ENCODE measurements at regions of chr1 and their contacts with region 1.

Region 1: GRCh38 chr1:100132566-100133477 is at the starts of genes SASS6 and TRMT13:
- H3K4me3 Mint-ChIP-seq: peak within 1 kb of the TSS; percentile 98
- H3K27ac Mint-ChIP-seq: peak within 1 kb of the TSS; percentile 86
- H3K4me1 Mint-ChIP-seq: peaks cover 22% of the 10 kb centered on the region
- H3K27me3 Mint-ChIP-seq: no peaks in the 10 kb centered on the region

Region 2: GRCh38 chr1:99877568-99877967 is 255.3 kb before region 1 on chr1:
- intact Hi-C with region 1: no loop called
- H3K4me3 Mint-ChIP-seq: no peak overlapping the region
- H3K27ac Mint-ChIP-seq: no peak overlapping the region
- H3K4me1 Mint-ChIP-seq: no peaks in the 10 kb centered on the region
- H3K27me3 Mint-ChIP-seq: no peaks in the 10 kb centered on the region

Region 3: GRCh38 chr1:99969729-99970621 is 162.8 kb before region 1 on chr1 and contains the start of gene SLC35A3:
- intact Hi-C with region 1: loop called (anchors 5 kb)
- H3K4me3 Mint-ChIP-seq: peak within 1 kb of the TSS; percentile 100
- H3K27ac Mint-ChIP-seq: peak within 1 kb of the TSS; percentile 83
- H3K4me1 Mint-ChIP-seq: peaks cover 17% of the 10 kb centered on the region
- H3K27me3 Mint-ChIP-seq: no peaks in the 10 kb centered on the region

Region 4: GRCh38 chr1:100051401-100051800 is 81.4 kb before region 1 on chr1:
- intact Hi-C with region 1: no loop called
- H3K4me3 Mint-ChIP-seq: no peak overlapping the region
- H3K27ac Mint-ChIP-seq: no peak overlapping the region
- H3K4me1 Mint-ChIP-seq: peaks cover 26% of the 10 kb centered on the region
- H3K27me3 Mint-ChIP-seq: no peaks in the 10 kb centered on the region

Region 5: GRCh38 chr1:100152271-100152670 is 19.4 kb after region 1 on chr1:
- intact Hi-C with region 1: no loop called
- H3K4me3 Mint-ChIP-seq: no peak overlapping the region
- H3K27ac Mint-ChIP-seq: no peak overlapping the region
- H3K4me1 Mint-ChIP-seq: peaks cover 18% of the 10 kb centered on the region
- H3K27me3 Mint-ChIP-seq: no peaks in the 10 kb centered on the region

Region 6: DNA sequence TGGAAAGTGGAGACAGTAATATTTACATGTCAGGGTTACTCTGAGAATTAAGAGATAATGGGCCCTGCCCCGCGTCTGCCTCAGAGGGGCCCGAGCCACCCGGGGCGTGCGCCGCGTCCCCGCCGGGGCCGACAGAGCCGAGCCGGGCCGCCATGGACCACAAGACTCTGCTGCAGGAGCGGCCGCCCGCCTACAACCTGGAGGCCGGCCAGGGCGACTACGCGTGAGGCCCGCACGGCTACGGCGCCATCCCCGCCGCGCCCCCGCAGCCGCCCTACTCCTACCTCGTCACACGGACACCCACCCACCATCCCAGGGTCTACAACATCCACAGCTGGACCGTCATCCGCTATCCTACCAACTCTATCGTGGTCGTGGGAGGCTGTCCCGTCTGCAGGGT is 80.3 kb after region 1 on chr1:
- intact Hi-C with region 1: no loop called
- H3K4me3 Mint-ChIP-seq: no peak overlapping the region
- H3K27ac Mint-ChIP-seq: no peak overlapping the region
- H3K4me1 Mint-ChIP-seq: no peaks in the 10 kb centered on the region
- H3K27me3 Mint-ChIP-seq: no peaks in the 10 kb centered on the region

Region 7: GRCh38 chr1:100249537-100250257 is 116.9 kb after region 1 on chr1 and contains the start of gene DBT:
- intact Hi-C with region 1: loop called (anchors 10 kb)
- H3K4me3 Mint-ChIP-seq: no peak within 1 kb of the TSS
- H3K27ac Mint-ChIP-seq: no peak within 1 kb of the TSS
- H3K4me1 Mint-ChIP-seq: peaks cover 7% of the 10 kb centered on the region
- H3K27me3 Mint-ChIP-seq: no peaks in the 10 kb centered on the region

Region 8: DNA sequence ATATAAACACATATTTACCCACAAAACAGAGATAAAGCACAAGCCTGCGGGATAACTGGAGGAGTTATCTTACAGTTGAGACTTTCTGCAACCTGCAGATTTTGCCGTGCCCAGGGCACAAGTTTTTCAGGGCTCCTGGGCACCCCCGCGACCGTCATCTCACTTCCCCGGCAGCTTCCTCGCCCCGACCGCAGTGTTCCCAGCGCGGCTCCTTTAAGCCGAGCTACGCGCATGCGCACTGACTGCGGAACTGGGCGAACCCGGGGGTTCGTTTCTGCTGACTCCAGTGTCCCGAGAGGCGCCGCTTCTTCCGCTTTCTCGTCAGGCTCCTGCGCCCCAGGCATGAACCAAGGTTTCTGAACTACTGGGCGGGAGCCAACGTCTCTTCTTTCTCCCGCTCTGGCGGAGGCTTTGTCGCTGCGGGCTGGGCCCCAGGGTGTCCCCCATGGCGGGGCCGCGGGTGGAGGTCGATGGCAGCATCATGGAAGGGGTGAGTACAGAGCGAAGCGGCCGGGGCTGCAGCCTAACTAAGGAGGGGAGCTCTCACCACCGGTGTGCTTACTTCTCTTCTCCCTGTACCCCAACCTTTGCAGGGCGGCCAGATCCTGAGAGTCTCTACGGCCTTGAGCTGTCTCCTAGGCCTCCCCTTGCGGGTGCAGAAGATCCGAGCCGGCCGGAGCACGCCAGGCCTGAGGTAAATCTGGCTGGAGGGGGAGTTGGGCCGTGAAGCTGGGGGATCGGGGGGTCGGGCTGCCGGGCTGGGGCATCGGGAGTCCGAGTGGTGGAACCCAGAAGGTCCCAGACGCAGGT is 133.3 kb after region 1 on chr1 and contains the start of gene RTCA:
- intact Hi-C with region 1: loop called (anchors 5 kb)
- H3K4me3 Mint-ChIP-seq: peak within 1 kb of the TSS; percentile 100
- H3K27ac Mint-ChIP-seq: peak within 1 kb of the TSS; percentile 99
- H3K4me1 Mint-ChIP-seq: peaks cover 35% of the 10 kb centered on the region
- H3K27me3 Mint-ChIP-seq: no peaks in the 10 kb centered on the region

Region 9: DNA sequence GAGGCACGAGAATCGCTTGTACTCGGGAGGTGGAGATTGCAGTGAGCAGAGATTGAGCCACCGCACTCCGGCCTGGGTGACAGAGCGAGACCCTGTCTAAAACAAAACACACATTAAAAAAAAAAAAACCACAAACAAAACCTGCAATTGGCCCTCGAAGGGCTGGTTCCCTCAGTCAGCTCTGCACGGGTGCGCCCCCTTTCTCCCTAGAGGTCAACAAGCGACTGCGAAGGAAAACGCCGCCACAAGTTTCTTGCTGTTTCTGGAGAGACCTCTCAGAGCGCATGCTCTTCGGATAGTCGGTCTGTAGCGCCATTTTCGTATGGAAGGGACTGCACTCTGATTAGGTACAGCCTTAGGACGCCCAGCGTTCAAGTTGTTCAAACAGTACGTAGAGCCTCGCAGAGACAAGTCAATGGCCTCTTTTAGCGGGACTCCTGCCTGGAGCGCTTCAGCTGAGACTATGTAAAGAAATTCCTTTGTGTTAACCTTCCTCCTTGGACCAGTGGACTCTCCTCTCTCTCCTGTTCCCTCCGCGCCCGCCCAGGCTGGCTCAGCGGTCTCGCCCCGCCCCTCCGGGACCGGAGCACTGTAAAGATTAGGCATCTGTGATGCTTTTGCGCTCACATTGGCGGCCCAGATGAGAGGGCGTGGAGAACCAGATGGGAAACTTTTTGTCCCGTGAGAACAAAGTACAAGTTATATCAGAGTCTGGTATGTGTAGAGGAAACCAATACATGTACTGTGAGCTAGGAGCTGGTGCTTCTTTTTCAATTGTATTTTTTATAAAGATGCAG is 218.5 kb after region 1 on chr1:
- intact Hi-C with region 1: loop called (anchors 2 kb)
- H3K4me3 Mint-ChIP-seq: peak overlapping the region; percentile 91
- H3K27ac Mint-ChIP-seq: peak overlapping the region; percentile 89
- H3K4me1 Mint-ChIP-seq: peaks cover 37% of the 10 kb centered on the region
- H3K27me3 Mint-ChIP-seq: no peaks in the 10 kb centered on the region

Region 10: DNA sequence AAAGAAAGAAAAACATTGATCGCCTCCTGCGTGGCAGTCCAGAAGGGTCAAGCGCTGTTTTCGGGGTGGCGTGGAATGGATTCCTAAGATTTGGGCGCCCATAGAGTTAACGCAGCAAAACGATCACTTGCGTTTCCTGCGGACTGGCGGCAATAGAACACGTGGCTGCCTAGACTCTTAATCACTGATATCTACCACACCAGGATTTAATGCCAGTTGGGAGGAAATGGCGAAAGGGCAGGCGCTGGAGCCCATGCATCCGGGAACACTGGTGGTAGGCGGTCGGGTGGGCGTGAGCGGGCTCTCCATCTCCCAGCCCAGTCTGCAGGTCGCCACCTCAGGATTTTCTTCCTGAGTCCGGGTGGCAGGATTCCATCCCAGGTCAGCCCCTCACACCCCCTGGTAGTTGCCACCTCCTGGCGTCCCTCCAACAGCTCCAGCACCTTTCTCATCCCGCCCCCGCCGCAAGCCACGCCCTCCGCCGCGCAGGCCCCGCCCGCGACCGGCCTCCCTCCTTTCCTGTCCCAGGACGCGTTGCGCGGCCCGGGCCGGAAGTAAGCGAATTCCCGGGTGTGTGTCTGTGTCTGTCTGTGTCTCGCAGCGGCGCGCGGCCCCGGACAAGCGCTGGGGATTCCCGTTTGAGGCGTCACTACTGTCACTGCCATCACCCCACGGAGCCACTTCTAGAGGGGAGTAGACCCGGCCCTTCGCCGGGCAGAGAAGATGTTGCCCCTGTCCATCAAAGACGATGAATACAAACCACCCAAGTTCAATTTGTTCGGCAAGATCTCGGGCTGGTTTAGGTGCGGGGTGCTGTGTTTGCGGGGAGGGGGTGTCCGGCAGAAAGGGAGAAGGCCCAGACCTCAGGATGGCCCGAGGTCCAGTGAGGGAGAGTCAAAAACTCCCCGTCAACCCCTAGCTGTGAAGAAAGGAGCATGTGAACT is 763.0 kb after region 1 on chr1 and contains the start of gene SLC30A7:
- intact Hi-C with region 1: loop called (anchors 10 kb)
- H3K4me3 Mint-ChIP-seq: peak within 1 kb of the TSS; percentile 87
- H3K27ac Mint-ChIP-seq: peak within 1 kb of the TSS; percentile 100
- H3K4me1 Mint-ChIP-seq: peaks cover 12% of the 10 kb centered on the region
- H3K27me3 Mint-ChIP-seq: no peaks in the 10 kb centered on the region

Measured in dendritic cell treated with granulocyte-macrophage colony-stimulating factor and Interleukin-4, amounts not matched to agents 40 ng/mL and 50 ng/mL, for 4 days (primary cell).